ENCODE measurements at regions of chr10 and their contacts with region 1.

Region 1: DNA sequence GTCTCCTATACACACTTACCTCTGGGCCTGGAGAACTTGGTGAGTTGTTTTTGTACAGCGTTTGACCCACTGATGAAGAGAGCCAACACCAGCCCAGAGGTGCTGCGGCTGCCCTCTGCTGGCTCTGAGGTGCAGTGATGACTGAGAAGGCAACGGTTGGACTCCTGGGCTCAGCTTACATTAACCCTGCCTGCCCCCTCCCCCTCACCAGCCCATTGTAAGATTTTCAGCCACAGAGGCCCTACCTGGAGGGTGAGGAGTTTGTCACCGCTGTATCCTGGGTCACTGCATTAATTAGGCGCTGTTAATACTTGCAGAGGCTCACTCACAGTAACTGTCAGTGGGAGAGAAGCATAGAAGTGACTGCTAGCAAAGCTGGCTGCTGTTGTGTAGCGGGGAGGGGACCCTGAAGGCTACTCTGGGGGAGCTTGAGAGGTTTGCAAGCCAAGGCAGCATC is 19.0 kb upstream of the ANKRD2 start:
- DNase-seq: peak in 1 of 2 experiments; percentile 81
- H3K4me3 ChIP-seq: peak overlapping the region in 3 of 4 experiments; percentile 30 to 32 (median 31); a peak in 6 of 8 replicates
- H3K27ac ChIP-seq: no peak overlapping the region; the same call in 1 of the 2 replicates
- H3K4me1 ChIP-seq: peaks cover 15 to 29% (median 22%) of the 10 kb centered on the region in 4 experiments
- H3K27me3 ChIP-seq: no peaks in the 10 kb centered on the region
- CTCF ChIP-seq: peak; percentile 89 to 95 (median 95)
- EP300 ChIP-seq: no peak
- POLR2A ChIP-seq: no peak
- RAD21 ChIP-seq: peak; percentile 84 to 88

Region 2: DNA sequence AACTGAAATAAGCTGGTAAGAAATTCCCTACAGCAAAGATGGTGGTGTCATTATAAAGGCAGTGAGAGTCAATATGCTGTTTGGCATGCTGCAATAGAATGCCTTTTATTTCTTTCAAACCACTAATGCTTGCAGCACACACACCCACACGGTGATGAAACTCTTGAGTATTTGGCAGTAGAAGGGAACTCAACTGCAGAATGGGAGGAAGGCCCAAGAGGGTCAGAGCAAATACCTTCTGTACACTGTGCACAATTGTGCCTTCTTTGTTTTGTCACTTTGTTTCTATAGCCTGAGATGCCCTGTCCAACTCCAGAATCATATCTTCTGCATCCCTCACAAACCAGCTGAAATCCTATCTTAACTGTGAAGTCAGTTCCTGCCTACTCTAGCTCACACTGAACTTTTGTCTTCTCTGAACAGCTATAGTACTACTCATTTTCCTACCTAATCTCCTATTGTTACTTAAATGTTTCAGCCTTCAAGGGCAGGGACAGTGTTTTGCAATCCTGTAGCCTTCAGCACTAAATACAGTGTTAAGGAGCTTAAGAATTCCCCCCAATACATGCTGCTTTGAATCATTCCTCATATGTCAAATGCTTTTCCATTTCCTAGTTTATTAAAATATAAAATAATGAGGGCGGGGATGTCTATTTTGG is 77.5 kb before region 1 on chr10:
- CTCF ChIA-PET with region 1: interaction called, 5 read pairs
- POLR2A ChIA-PET with region 1: interaction called, 11 read pairs
- DNase-seq: no peak
- H3K4me3 ChIP-seq: no peak overlapping the region
- H3K27ac ChIP-seq: no peak overlapping the region
- H3K4me1 ChIP-seq: peaks cover 8 to 13% (median 10%) of the 10 kb centered on the region in 4 experiments; a peak in 6 of 7 replicates
- H3K27me3 ChIP-seq: no peaks in the 10 kb centered on the region
- CTCF ChIP-seq: no peak
- EP300 ChIP-seq: no peak
- POLR2A ChIP-seq: no peak
- RAD21 ChIP-seq: no peak

Region 3: DNA sequence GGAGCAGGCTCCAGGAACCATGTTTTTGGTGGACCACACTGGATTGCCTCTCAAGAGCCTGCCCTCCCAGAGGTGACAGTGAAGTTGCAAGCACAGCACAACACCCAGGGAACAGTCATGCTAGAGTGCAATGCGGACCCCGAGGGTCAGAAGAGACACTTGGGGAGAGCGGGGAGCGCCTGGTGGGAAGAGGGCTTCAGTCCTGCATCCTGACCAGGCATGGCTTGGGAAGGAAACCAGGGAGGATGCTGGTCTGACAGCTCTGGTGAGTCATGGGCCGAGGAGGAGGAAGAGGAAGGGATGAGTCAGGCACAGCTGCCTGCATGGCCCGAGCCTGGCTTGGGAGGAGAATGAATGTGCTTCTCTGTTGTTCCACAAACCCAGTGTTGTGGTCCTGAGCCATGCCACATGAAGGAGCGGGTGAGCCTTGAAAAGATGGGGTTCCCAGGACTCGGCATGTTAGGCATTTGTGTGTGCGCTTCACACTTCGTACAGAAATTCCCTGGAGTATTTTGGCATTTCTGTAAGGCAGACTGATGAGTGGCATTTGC is 10.5 kb before region 1 on chr10:
- CTCF ChIA-PET with region 1: interaction called, 388 read pairs
- POLR2A ChIA-PET with region 1: interaction called, 12 read pairs
- DNase-seq: no peak
- H3K4me3 ChIP-seq: no peak overlapping the region
- H3K27ac ChIP-seq: no peak overlapping the region
- H3K4me1 ChIP-seq: peaks cover 0 to 21% (median 8%) of the 10 kb centered on the region in 4 experiments; a peak in 6 of 7 replicates
- H3K27me3 ChIP-seq: no peaks in the 10 kb centered on the region
- CTCF ChIP-seq: no peak
- EP300 ChIP-seq: no peak
- POLR2A ChIP-seq: no peak
- RAD21 ChIP-seq: no peak

Region 4: GRCh38 chr10:97648562-97649404 is 95.2 kb after region 1 on chr10:
- CTCF ChIA-PET with region 1: no interaction called
- POLR2A ChIA-PET with region 1: no interaction called
- DNase-seq: peak in 1 of 2 experiments; percentile 52
- H3K4me3 ChIP-seq: peak overlapping the region in 3 of 4 experiments; percentile 28 to 36 (median 34); a peak in 5 of 8 replicates
- H3K27ac ChIP-seq: peak overlapping the region; percentile 25; the same call in 1 of the 2 replicates
- H3K4me1 ChIP-seq: peaks cover 5 to 11% (median 9%) of the 10 kb centered on the region in 4 experiments; a peak in 6 of 7 replicates
- H3K27me3 ChIP-seq: no peaks in the 10 kb centered on the region
- CTCF ChIP-seq: no peak
- EP300 ChIP-seq: no peak
- POLR2A ChIP-seq: no peak
- RAD21 ChIP-seq: no peak

Measured in H1 (cell line).